GM12878 (cell line): ENCODE measurements at regions of chr5 and their contacts with region 1.

Region 1: GRCh38 chr5:156934450-156935211 is 28.4 kb downstream of the TIMD4 start:
- DNase-seq: no peak
- ATAC-seq: peak; percentile 53
- H3K4me3 ChIP-seq: no peak overlapping the region
- H3K27ac ChIP-seq: no peak overlapping the region; the same call in none of the 2 replicates
- H3K4me1 ChIP-seq: peaks cover 29% of the 10 kb centered on the region
- H3K27me3 ChIP-seq: no peaks in the 10 kb centered on the region
- CTCF ChIP-seq: peak; percentile 78 to 85 (median 78)
- EP300 ChIP-seq: no peak
- POLR2A ChIP-seq: no peak
- RAD21 ChIP-seq: peak; percentile 96

Region 2: DNA sequence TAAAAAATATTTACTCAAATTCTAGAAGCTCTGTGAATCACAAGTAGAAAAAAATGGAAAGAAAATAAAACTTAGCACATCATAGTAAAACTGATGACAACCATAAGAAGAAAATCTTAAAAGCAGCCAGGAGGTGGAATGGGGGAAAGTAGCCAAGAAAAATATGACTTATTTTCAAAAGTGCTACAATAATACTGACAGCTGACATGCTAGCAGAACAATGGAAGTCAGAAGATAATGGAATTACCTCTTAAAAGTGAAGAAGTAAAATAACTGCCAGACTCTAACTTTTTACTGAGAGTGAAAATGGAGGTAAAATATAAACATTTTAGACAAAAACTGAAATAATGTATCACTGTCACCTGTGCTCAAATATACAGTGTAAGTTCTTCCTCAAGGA is 1139.8 kb before region 1 on chr5:
- CTCF ChIA-PET with region 1: no interaction called
- POLR2A ChIA-PET with region 1: no interaction called
- RAD21 ChIA-PET with region 1: no interaction called
- SMC1A ChIA-PET with region 1: no interaction called
- in situ Hi-C with region 1: no loop called
- intact Hi-C with region 1: no loop called
- DNase-seq: no peak
- ATAC-seq: no peak
- H3K4me3 ChIP-seq: no peak overlapping the region
- H3K27ac ChIP-seq: no peak overlapping the region
- H3K4me1 ChIP-seq: no peaks in the 10 kb centered on the region
- H3K27me3 ChIP-seq: no peaks in the 10 kb centered on the region
- CTCF ChIP-seq: no peak
- EP300 ChIP-seq: no peak
- POLR2A ChIP-seq: no peak
- RAD21 ChIP-seq: no peak

Region 3: DNA sequence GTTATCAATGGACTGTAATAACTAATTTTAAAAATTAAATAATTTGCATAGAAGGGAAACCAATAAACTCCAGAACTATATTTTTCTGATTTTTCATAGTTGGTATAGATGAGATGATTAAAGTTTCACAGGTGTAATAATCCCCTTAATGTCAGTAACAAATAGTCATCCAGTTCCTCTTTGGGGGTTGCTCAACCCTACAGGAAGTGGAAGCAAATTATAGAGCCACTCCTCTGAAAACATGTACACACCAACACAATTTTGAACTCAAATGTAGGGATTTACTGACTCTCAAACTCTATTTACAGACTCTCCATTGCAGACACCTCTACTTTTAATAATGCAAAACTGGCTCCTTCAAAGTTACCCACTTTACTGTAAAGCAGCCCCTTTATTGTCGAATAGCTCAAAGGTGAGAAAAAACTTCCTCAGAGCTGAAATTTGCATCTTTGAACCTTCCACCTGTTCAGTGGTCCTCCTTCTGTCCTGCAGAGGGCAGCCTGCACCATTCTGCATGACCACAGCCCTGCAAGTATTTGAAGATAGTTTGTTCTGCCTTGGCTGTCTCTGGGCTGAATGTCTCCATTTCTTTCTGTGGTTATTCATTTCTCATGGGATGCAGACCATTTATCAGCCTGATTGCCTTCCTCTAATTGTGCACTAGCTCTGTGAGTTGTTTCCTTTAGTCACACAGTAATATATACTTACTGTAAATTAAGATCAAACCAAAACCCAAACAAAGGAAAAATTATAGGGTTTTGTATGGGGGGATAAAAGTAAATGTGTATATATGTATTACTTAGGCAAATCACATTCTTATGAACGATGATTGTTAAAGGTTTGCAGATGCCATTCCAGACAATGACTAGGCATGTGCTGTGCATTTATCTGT is 990.9 kb before region 1 on chr5:
- CTCF ChIA-PET with region 1: interaction called, 6 read pairs
- POLR2A ChIA-PET with region 1: no interaction called
- RAD21 ChIA-PET with region 1: interaction called, 3 read pairs
- SMC1A ChIA-PET with region 1: no interaction called
- in situ Hi-C with region 1: loop called (anchors 10 kb)
- intact Hi-C with region 1: loop called (anchors 2 kb)
- DNase-seq: no peak
- ATAC-seq: peak; percentile 93
- H3K4me3 ChIP-seq: no peak overlapping the region
- H3K27ac ChIP-seq: no peak overlapping the region
- H3K4me1 ChIP-seq: no peaks in the 10 kb centered on the region
- H3K27me3 ChIP-seq: no peaks in the 10 kb centered on the region; a peak in 2 of 4 replicates
- CTCF ChIP-seq: peak; percentile 69 to 79 (median 76)
- EP300 ChIP-seq: no peak
- POLR2A ChIP-seq: no peak
- RAD21 ChIP-seq: peak; percentile 83

Region 4: GRCh38 chr5:156667616-156668015 is 267.0 kb before region 1 on chr5:
- CTCF ChIA-PET with region 1: interaction called, 7 read pairs
- POLR2A ChIA-PET with region 1: no interaction called
- RAD21 ChIA-PET with region 1: interaction called, 5 read pairs
- SMC1A ChIA-PET with region 1: interaction called, 9 read pairs
- in situ Hi-C with region 1: no loop called
- intact Hi-C with region 1: loop called (anchors 2 kb)
- DNase-seq: no peak
- ATAC-seq: no peak
- H3K4me3 ChIP-seq: no peak overlapping the region
- H3K27ac ChIP-seq: no peak overlapping the region
- H3K4me1 ChIP-seq: no peaks in the 10 kb centered on the region
- H3K27me3 ChIP-seq: peaks cover 0 to 1% of the 10 kb centered on the region in 2 experiments; a peak in 2 of 4 replicates
- CTCF ChIP-seq: no peak
- EP300 ChIP-seq: no peak
- POLR2A ChIP-seq: no peak
- RAD21 ChIP-seq: no peak

Region 5: DNA sequence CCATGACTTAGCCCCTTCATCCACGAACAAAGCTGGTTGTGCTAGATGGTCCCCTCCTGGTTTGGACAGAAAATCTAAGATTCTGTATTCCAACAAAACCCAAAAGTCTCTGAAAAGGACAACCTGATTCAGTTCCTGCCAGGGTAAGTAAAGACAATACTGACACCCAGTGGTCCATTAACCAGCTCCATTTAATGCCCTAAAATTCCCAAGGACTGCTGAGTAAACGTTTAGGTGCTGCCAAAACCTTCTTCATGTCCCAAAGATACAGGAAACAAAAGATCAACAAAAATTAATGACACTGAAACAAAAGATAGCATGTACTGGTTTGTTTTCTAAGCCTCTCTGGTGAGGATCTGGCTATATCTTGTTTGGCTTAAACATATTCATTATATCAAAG is 109.8 kb before region 1 on chr5:
- CTCF ChIA-PET with region 1: interaction called, 9 read pairs
- POLR2A ChIA-PET with region 1: no interaction called
- RAD21 ChIA-PET with region 1: interaction called, 13 read pairs
- SMC1A ChIA-PET with region 1: interaction called, 4 read pairs
- in situ Hi-C with region 1: no loop called
- intact Hi-C with region 1: no loop called
- DNase-seq: no peak
- ATAC-seq: no peak
- H3K4me3 ChIP-seq: no peak overlapping the region
- H3K27ac ChIP-seq: no peak overlapping the region
- H3K4me1 ChIP-seq: peaks cover 11% of the 10 kb centered on the region
- H3K27me3 ChIP-seq: no peaks in the 10 kb centered on the region
- CTCF ChIP-seq: peak; percentile 4 to 45 (median 19); a peak in 2 of 6 replicates
- EP300 ChIP-seq: no peak
- POLR2A ChIP-seq: no peak
- RAD21 ChIP-seq: peak; percentile 49

Region 6: DNA sequence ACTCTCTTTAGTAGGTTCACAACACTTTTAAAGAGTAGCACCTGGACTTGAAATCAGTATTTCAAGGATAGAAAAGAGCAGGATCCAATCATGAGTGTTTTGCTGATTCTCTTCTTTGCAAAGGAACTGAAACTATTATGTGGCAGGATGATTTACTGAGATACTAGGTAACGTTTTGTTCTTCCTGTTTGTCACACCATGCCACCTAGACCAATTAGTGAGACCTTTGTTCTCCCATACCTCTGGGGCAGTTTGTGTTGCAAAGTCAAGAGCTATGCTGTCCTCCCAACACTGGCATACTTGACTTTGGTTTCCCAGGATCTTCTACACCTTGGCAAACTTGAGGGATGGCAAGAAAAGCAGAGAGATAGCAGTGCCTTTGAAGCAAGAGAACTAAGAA is 41.1 kb before region 1 on chr5:
- CTCF ChIA-PET with region 1: interaction called, 16 read pairs
- POLR2A ChIA-PET with region 1: interaction called, 5 read pairs
- RAD21 ChIA-PET with region 1: interaction called, 22 read pairs
- SMC1A ChIA-PET with region 1: interaction called, 38 read pairs
- in situ Hi-C with region 1: no loop called
- intact Hi-C with region 1: loop called (anchors 2 kb)
- DNase-seq: peak; percentile 52
- ATAC-seq: peak; percentile 82
- H3K4me3 ChIP-seq: no peak overlapping the region
- H3K27ac ChIP-seq: peak overlapping the region; percentile 47; the same call in 1 of the 2 replicates
- H3K4me1 ChIP-seq: peaks cover 23% of the 10 kb centered on the region
- H3K27me3 ChIP-seq: no peaks in the 10 kb centered on the region
- CTCF ChIP-seq: no peak
- EP300 ChIP-seq: peak in 1 of 2 experiments; percentile 51; a peak in 1 of 4 replicates
- POLR2A ChIP-seq: no peak
- RAD21 ChIP-seq: no peak

Region 7: GRCh38 chr5:157026789-157027424 is 92.3 kb after region 1 on chr5:
- CTCF ChIA-PET with region 1: interaction called, 49 read pairs
- POLR2A ChIA-PET with region 1: interaction called, 6 read pairs
- RAD21 ChIA-PET with region 1: interaction called, 6 read pairs
- SMC1A ChIA-PET with region 1: interaction called, 8 read pairs
- in situ Hi-C with region 1: no loop called
- intact Hi-C with region 1: loop called (anchors 5 kb)
- DNase-seq: no peak
- ATAC-seq: peak; percentile 48
- H3K4me3 ChIP-seq: no peak overlapping the region
- H3K27ac ChIP-seq: no peak overlapping the region
- H3K4me1 ChIP-seq: peaks cover 6% of the 10 kb centered on the region
- H3K27me3 ChIP-seq: no peaks in the 10 kb centered on the region
- CTCF ChIP-seq: peak; percentile 67 to 75 (median 69)
- EP300 ChIP-seq: no peak
- POLR2A ChIP-seq: no peak
- RAD21 ChIP-seq: peak; percentile 70

Region 8: GRCh38 chr5:157130925-157131324 is 196.3 kb after region 1 on chr5:
- CTCF ChIA-PET with region 1: interaction called, 38 read pairs
- POLR2A ChIA-PET with region 1: interaction called, 3 read pairs
- RAD21 ChIA-PET with region 1: interaction called, 23 read pairs
- SMC1A ChIA-PET with region 1: interaction called, 30 read pairs
- in situ Hi-C with region 1: no loop called
- intact Hi-C with region 1: loop called (anchors 2 kb)
- DNase-seq: no peak
- ATAC-seq: peak; percentile 82
- H3K4me3 ChIP-seq: no peak overlapping the region
- H3K27ac ChIP-seq: no peak overlapping the region
- H3K4me1 ChIP-seq: peaks cover 5% of the 10 kb centered on the region; the same call in 1 of the 2 replicates
- H3K27me3 ChIP-seq: no peaks in the 10 kb centered on the region
- CTCF ChIP-seq: no peak
- EP300 ChIP-seq: no peak
- POLR2A ChIP-seq: no peak
- RAD21 ChIP-seq: peak; percentile 11; the same call in 1 of the 2 replicates